H1 (cell line): ENCODE measurements at regions of chr14 and their contacts with region 1.

Region 1: DNA sequence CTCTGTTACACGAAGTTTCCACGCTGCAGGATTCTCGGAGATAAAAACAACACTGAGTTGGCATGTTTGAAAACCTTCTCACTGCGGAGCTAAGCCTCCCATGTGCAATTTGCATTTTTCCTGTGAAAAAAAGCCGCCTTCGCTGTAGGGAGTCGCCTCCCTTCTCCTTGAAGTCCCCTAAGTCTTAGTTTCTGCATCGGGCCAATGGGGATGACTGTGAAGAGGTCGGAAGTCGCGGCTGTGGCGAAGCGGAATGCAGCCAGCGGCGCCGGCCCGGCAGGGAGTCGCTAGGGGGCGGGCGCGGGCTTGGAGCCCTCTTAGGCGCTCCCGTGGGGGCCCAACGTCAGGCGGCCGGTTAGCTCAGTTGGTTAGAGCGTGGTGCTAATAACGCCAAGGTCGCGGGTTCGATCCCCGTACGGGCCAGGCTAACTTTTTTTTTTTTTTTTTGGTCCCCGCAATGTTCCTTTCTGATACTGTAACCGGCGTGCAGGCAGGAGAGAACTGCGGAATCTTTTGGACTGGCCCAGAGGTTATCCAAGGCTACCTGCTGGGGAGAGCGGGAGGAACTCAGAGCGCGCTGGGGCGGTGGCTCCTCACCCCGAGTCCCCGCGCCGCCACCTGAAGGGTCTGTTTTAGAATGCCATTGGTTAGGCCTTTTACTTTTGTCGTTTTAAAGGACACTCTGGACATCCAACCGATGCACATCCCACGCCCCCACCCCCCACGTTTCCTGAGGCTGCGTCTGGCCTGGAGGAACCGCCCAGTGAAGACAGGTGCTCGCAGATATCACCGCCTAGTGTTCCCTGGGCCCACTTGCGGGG is 2.6 kb upstream of the ZNF839 start:
- DNase-seq: peak; percentile 72 to 99
- H3K4me3 ChIP-seq: peak overlapping the region; percentile 78 to 89 (median 79)
- H3K27ac ChIP-seq: peak overlapping the region; percentile 13; the same call in 1 of the 2 replicates
- H3K4me1 ChIP-seq: peaks cover 1 to 9% (median 4%) of the 10 kb centered on the region in 4 experiments; a peak in 5 of 7 replicates
- H3K27me3 ChIP-seq: peaks cover 0 to 14% (median 12%) of the 10 kb centered on the region in 4 experiments; a peak in 5 of 7 replicates
- CTCF ChIP-seq: peak; percentile 6 to 16 (median 15); a peak in 3 of 4 replicates
- EP300 ChIP-seq: peak in 1 of 2 experiments; percentile 40; a peak in 1 of 3 replicates
- POLR2A ChIP-seq: peak in 1 of 2 experiments; percentile 53; a peak in 2 of 3 replicates
- RAD21 ChIP-seq: no peak; a peak in 1 of 4 replicates

Region 2: GRCh38 chr14:102220031-102220430 is 96.9 kb before region 1 on chr14:
- CTCF ChIA-PET with region 1: interaction called, 15 read pairs
- POLR2A ChIA-PET with region 1: interaction called, 3 read pairs
- DNase-seq: peak in 1 of 2 experiments; percentile 42
- H3K4me3 ChIP-seq: no peak overlapping the region
- H3K27ac ChIP-seq: no peak overlapping the region
- H3K4me1 ChIP-seq: peaks cover 0 to 16% (median 6%) of the 10 kb centered on the region in 4 experiments; a peak in 6 of 7 replicates
- H3K27me3 ChIP-seq: no peaks in the 10 kb centered on the region
- CTCF ChIP-seq: no peak
- EP300 ChIP-seq: no peak
- POLR2A ChIP-seq: no peak
- RAD21 ChIP-seq: no peak

Region 3: GRCh38 chr14:102235275-102235897 is 81.6 kb before region 1 on chr14:
- CTCF ChIA-PET with region 1: interaction called, 44 read pairs
- POLR2A ChIA-PET with region 1: interaction called, 5 read pairs
- DNase-seq: peak; percentile 53 to 92
- H3K4me3 ChIP-seq: no peak overlapping the region
- H3K27ac ChIP-seq: no peak overlapping the region
- H3K4me1 ChIP-seq: peaks cover 0 to 6% (median 2%) of the 10 kb centered on the region in 4 experiments; a peak in 4 of 7 replicates
- H3K27me3 ChIP-seq: no peaks in the 10 kb centered on the region
- CTCF ChIP-seq: peak; percentile 88 to 92 (median 91)
- EP300 ChIP-seq: no peak
- POLR2A ChIP-seq: no peak
- RAD21 ChIP-seq: peak; percentile 86 to 91

Region 4: GRCh38 chr14:102304611-102305509 is 12.1 kb before region 1 on chr14 and contains the start of gene MOK:
- CTCF ChIA-PET with region 1: interaction called, 19 read pairs
- POLR2A ChIA-PET with region 1: interaction called, 14 read pairs
- DNase-seq: peak; percentile 97 to 100
- H3K4me3 ChIP-seq: peak within 1 kb of the TSS; percentile 67 to 83 (median 74)
- H3K27ac ChIP-seq: peak within 1 kb of the TSS; percentile 5; the same call in 1 of the 2 replicates
- H3K4me1 ChIP-seq: no peaks in the 10 kb centered on the region
- H3K27me3 ChIP-seq: no peaks in the 10 kb centered on the region
- CTCF ChIP-seq: no peak
- EP300 ChIP-seq: no peak
- POLR2A ChIP-seq: no peak
- RAD21 ChIP-seq: 0 out of 4 replicates have a peak, but pooled peaks of 1 of the 2 experiments have one; percentile 2
- total RNA-seq, gene MOK: 1.7 and 2.5 TPM in 2 replicates

Region 5: DNA sequence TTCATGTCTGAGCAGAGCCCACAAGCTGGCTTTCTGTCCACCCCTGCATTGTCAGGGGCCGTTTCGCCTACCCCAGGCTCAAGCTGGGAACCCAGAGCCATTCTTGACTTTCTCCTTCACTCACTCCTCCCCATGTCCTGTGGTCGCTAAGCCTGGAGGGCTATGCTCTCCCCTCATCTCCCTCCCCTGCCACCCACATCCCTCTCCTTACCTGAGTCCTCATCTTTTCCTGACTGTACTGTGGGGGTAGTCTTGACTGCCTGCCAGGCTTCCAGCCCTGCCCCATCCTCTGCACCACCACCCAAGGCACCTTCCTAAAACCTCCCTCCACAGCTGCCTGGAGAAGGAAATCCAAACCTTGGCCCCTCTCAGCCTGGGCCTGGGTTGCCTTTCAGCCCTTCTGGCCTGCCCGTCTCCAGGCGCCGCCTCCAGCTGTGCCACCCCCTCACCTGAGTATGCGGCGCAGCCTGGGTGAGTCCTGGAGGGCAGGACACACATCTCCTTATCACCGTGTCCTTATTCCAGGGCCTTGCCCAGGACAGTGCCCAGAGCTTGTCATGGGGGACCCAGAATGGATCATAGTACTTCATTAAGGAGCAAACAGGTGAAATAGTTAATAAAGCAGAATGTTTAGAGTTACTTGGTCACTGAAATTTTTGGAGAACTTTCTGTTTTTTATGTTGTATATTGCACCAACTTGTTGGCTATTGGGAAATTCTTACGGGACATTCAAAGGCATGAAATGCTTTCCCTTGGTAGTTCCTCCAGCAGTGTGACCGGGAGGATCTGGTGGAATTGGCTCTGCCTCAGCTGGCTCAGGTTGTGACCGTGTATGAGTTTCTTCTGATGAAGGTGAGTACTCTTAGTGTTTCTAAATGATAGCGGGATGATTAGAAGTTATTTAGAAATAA is 17.1 kb after region 1 on chr14:
- CTCF ChIA-PET with region 1: interaction called, 22 read pairs
- POLR2A ChIA-PET with region 1: interaction called, 5 read pairs
- DNase-seq: no peak
- H3K4me3 ChIP-seq: no peak overlapping the region
- H3K27ac ChIP-seq: no peak overlapping the region
- H3K4me1 ChIP-seq: no peaks in the 10 kb centered on the region; a peak in 1 of 7 replicates
- H3K27me3 ChIP-seq: no peaks in the 10 kb centered on the region
- CTCF ChIP-seq: no peak
- EP300 ChIP-seq: no peak
- POLR2A ChIP-seq: no peak
- RAD21 ChIP-seq: no peak